Activated CD4-positive, alpha-beta T cell treated with anti-CD3 and anti-CD28 coated beads for 36 hours (primary cell): ENCODE measurements at regions of chr12 and their contacts with region 1.

Region 1: DNA sequence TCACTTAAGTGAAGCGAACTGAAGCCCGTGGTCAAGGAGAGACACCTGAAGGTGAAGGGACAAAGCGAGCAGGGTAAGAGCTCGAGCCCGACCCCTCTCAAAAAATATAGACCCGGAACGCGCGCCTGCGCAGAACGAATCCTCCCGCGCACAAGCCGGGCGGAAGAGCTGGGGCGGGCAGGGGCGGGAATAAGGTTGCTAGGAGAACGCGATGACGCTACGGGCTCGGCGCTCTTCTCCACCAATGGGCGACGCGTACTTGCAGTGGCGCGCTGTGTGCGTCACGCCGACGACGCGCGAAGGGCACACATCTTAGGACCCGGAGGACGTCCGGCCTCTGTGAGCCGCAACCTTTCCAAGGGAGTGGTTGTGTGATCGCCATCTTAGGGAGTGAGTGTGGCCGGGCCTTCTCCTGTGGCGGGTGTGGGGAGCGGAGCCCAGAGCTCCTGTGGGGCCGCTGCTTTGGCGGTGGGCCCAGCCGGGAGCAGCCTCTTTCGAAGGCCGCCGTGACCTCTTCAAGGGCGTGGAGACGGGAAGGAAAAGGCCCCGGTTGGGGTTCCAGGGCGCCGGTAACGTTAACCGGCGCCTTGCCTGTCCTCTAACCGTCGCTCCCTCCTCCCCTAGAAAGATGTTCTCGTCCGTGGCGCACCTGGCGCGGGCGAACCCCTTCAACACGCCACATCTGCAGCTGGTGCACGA is at the start of gene SLC25A3:
- DNase-seq: peak; percentile 97
- ATAC-seq: peak; percentile 97
- H3K4me3 Mint-ChIP-seq: peak within 1 kb of the TSS; percentile 97
- H3K27ac Mint-ChIP-seq: peak within 1 kb of the TSS; percentile 89
- H3K4me1 Mint-ChIP-seq: peaks cover 25% of the 10 kb centered on the region
- H3K27me3 Mint-ChIP-seq: no peaks in the 10 kb centered on the region
- total RNA-seq, gene SLC25A3: 426 to 591 TPM

Region 2: DNA sequence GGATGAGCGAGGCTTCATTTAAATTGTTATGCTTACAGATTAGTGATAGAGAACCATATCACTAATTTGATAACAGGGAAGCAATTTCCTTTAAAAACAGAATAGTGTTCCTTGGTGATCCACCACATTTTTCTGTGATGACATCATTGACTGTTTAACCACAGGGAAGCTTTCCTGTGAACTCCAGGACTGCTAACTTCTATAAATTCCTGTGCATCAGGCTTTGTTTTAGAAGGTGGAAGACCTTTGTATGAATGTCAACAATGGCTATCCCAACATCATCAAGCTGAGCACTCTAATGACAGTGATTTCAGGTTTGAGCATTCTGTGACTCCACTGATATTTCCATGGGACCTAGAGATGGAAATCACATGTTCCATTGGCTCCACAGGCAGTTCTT is 953.8 kb before region 1 on chr12:
- CTCF ChIA-PET with region 1: no interaction called
- POLR2A ChIA-PET with region 1: no interaction called
- intact Hi-C with region 1: no loop called
- DNase-seq: no peak
- ATAC-seq: no peak
- H3K4me3 Mint-ChIP-seq: no peak overlapping the region
- H3K27ac Mint-ChIP-seq: no peak overlapping the region
- H3K4me1 Mint-ChIP-seq: no peaks in the 10 kb centered on the region
- H3K27me3 Mint-ChIP-seq: no peaks in the 10 kb centered on the region

Region 3: DNA sequence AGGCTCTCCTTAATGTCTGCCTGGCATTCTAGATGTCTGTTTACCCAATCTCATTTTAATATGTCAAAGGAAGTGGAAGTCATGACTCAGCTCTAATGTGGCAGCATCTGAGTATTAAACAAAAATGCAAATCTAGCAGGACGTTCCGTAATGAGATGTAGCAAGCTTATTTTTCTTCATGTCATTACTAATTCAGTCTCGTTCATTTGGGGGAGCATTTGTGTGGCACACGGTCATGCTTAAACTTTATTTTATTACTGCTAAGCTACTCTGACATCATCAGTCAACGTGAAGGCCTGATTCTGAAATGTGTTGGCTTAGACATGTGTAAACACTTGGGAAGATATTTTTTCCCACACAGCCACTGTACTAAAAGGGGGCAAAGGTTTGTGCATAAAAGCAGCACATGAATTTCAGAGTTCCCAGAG is 404.8 kb before region 1 on chr12:
- CTCF ChIA-PET with region 1: no interaction called
- POLR2A ChIA-PET with region 1: no interaction called
- intact Hi-C with region 1: no loop called
- DNase-seq: no peak
- ATAC-seq: no peak
- H3K4me3 Mint-ChIP-seq: no peak overlapping the region
- H3K27ac Mint-ChIP-seq: no peak overlapping the region
- H3K4me1 Mint-ChIP-seq: no peaks in the 10 kb centered on the region
- H3K27me3 Mint-ChIP-seq: no peaks in the 10 kb centered on the region

Region 4: GRCh38 chr12:98503592-98504367 is 89.7 kb before region 1 on chr12:
- CTCF ChIA-PET with region 1: no interaction called
- POLR2A ChIA-PET with region 1: interaction called, 4 read pairs
- intact Hi-C with region 1: loop called (anchors 1 kb)
- DNase-seq: peak; percentile 98
- ATAC-seq: peak; percentile 85
- H3K4me3 Mint-ChIP-seq: peak overlapping the region; percentile 84
- H3K27ac Mint-ChIP-seq: peak overlapping the region; percentile 99
- H3K4me1 Mint-ChIP-seq: peaks cover 37% of the 10 kb centered on the region
- H3K27me3 Mint-ChIP-seq: peaks cover 2% of the 10 kb centered on the region

Region 5: GRCh38 chr12:98532681-98533304 is 60.7 kb before region 1 on chr12:
- CTCF ChIA-PET with region 1: interaction called, 3 read pairs
- POLR2A ChIA-PET with region 1: no interaction called
- intact Hi-C with region 1: loop called in 1 of 2 experiments (anchors 2 kb)
- DNase-seq: no peak
- ATAC-seq: peak; percentile 61
- H3K4me3 Mint-ChIP-seq: no peak overlapping the region
- H3K27ac Mint-ChIP-seq: no peak overlapping the region
- H3K4me1 Mint-ChIP-seq: peaks cover 5% of the 10 kb centered on the region
- H3K27me3 Mint-ChIP-seq: no peaks in the 10 kb centered on the region

Region 6: GRCh38 chr12:98572010-98572409 is 21.5 kb before region 1 on chr12:
- CTCF ChIA-PET with region 1: interaction called, 21 read pairs
- POLR2A ChIA-PET with region 1: interaction called, 3 read pairs
- intact Hi-C with region 1: no loop called
- DNase-seq: no peak
- ATAC-seq: no peak
- H3K4me3 Mint-ChIP-seq: no peak overlapping the region
- H3K27ac Mint-ChIP-seq: no peak overlapping the region
- H3K4me1 Mint-ChIP-seq: peaks cover under 1% of the 10 kb centered on the region
- H3K27me3 Mint-ChIP-seq: no peaks in the 10 kb centered on the region

Region 7: DNA sequence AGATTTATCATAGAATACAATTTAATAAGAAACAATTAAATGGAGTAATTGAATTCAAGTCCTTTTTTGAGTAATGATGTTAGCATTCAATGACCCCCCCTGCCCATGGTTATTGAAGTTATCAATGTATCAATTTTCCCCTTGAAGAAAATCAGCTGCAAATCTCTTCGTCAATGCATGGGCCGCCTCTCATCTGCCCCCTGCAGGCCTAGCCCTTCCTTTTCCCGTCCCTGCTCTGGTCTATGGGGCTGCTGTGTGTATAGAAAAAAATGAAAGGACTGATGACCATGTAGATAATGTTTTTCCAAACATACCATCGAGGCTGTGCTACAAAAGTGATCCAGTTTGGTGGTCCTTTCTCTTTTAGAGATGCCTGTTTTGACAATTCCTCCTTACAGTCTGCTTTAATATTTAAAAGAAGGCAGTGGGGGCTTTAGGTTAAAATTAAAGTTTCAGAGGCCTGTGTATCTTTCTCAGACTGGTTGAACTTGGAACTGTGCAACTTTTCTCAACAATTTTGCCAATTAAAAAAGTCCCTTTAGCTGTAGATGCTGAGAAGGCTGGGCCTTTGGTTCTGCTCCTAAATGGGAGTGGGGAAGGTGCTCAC is 149.9 kb after region 1 on chr12:
- CTCF ChIA-PET with region 1: interaction called, 4 read pairs
- POLR2A ChIA-PET with region 1: interaction called, 5 read pairs
- intact Hi-C with region 1: loop called (anchors 1 to 2 kb)
- DNase-seq: peak; percentile 75
- ATAC-seq: no peak
- H3K4me3 Mint-ChIP-seq: no peak overlapping the region
- H3K27ac Mint-ChIP-seq: no peak overlapping the region
- H3K4me1 Mint-ChIP-seq: peaks cover 58% of the 10 kb centered on the region
- H3K27me3 Mint-ChIP-seq: peaks cover 18% of the 10 kb centered on the region

Region 8: DNA sequence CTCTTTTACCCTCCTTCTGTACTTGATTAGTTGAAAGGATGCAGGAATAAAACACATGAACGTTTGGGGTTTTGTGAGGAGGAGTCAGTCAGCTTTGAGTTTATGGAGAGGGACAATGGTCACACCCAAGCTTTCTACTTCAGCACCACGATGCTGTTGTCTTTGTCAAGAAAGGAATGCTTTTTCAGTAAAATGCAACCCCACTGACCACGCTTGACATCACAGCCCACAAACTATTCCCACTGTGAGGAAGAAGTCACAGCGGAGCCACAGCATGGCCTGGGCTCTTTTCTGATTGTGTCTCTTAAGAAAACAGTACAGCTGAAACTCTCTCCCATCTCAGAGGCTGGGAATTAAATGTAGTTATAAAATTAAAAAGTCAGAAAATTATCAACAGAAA is 186.8 kb after region 1 on chr12:
- CTCF ChIA-PET with region 1: no interaction called
- POLR2A ChIA-PET with region 1: no interaction called
- intact Hi-C with region 1: no loop called
- DNase-seq: no peak
- ATAC-seq: no peak
- H3K4me3 Mint-ChIP-seq: no peak overlapping the region
- H3K27ac Mint-ChIP-seq: no peak overlapping the region
- H3K4me1 Mint-ChIP-seq: no peaks in the 10 kb centered on the region
- H3K27me3 Mint-ChIP-seq: peaks cover 18% of the 10 kb centered on the region

Region 9: DNA sequence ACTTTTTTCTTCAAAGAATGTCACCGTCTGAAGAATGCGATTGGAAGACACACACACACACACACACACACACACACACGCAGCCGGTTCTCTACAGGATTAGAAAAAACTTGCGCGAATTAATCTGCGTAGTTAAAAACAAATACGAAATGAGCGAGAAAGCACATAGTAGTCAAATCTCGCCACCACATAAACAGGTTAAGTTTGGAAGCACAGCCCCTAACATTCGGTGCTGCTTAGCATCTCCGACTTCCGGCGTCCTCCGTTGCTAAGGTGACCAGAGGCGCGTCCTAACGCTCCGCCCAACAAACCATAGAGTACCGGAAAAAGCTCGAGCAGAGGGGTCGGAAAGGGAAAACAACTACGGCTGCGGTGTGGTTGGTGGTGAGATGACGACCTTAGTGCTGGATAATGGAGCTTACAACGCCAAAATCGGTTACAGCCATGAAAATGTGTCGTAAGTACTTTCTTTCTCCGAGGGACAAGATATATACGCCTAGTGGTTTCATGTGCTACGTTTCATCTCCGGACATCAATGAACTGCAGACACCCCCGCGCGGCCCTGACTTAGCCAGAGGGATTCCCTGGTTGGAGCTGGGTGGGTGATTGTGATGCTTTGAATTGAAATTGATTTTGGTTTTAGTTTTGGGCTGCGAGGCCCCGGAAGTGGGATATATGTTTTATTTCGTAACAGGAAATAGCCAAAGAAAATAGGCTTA is 1607.1 kb after region 1 on chr12 and contains the start of gene ACTR6:
- CTCF ChIA-PET with region 1: no interaction called
- POLR2A ChIA-PET with region 1: interaction called, 5 read pairs
- intact Hi-C with region 1: loop called in 1 of 2 experiments (anchors 5 kb)
- DNase-seq: peak; percentile 98
- ATAC-seq: peak; percentile 84
- H3K4me3 Mint-ChIP-seq: peak within 1 kb of the TSS; percentile 93
- H3K27ac Mint-ChIP-seq: peak within 1 kb of the TSS; percentile 100
- H3K4me1 Mint-ChIP-seq: peaks cover 26% of the 10 kb centered on the region
- H3K27me3 Mint-ChIP-seq: no peaks in the 10 kb centered on the region
- total RNA-seq, gene ACTR6: 21.6 to 37.3 TPM